Left cardiac atrium (tissue), 4 donors: ENCODE measurements at regions of chr3 and their contacts with region 1.

Region 1: GRCh38 chr3:128426128-128426921 is 40.4 kb downstream of the DNAJB8 start:
- DNase-seq: peak; percentile 51
- ATAC-seq: peak; percentile 91 to 93

Region 2: GRCh38 chr3:128584412-128585020 is 158.2 kb after region 1 on chr3:
- intact Hi-C with region 1: loop called (anchors 5 to 10 kb)
- DNase-seq: peak; percentile 87
- ATAC-seq: peak; percentile 99

Region 3: GRCh38 chr3:128603811-128604775 is 177.8 kb after region 1 on chr3:
- intact Hi-C with region 1: loop called in 1 of 2 experiments (anchors 5 kb)
- DNase-seq: no peak
- ATAC-seq: no peak

Region 4: DNA sequence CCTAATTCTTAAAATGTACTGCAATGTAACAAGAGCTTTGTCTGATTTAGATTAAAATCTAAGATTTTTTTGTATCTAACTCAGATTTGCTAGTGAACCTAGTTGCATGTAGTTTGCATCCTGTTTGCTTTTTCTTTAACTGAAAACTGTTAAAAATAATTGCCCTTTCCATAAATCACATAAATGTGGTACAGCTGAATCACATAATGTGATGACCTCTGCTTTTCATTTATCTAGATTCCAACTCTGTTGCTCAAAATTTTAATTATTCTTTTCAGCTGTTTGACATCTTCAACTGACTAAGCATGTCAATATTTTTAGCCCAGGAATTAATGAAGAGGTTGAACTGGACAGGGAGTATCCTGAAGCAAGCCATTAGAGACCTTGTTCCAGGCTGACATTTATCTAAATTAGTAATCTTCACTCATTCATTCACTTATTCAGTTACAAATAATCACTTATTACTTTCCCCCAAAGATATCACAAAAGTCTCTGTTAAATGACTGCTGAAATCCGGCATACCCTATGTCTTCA is 1282.1 kb after region 1 on chr3:
- intact Hi-C with region 1: no loop called
- DNase-seq: no peak
- ATAC-seq: no peak